GM12878 (cell line): ENCODE measurements at regions of chr5 and their contacts with region 1.

Region 1: DNA sequence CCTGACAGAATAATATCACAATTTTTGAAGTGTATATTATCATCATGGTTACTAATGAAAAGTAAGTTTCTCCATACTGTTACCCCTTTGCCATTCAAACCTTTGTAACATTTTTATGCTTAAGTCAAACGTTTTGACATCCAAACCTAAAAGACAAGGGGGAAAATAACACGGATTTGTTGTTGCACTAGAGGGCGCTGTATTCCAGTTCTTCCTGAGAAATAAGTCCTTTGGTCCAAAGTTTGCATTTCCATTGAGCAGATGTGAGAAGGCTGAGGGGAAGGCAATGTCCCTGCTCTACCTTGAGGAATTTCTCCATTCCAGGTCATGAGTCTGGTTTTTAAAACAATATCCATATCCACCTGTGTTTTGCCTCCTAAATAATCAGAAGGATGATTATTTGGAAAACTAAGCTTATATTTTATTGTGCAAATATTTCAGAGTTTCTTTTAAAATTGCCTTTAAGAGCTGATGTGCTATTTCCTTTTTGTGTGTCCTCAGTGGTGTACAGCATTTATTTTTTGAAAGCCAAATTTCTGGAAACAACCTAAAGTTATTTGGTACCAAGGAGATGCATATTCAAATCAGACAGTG is 9.7 kb downstream of the LECT2 start:
- DNase-seq: no peak
- ATAC-seq: peak; percentile 70
- H3K4me3 ChIP-seq: no peak overlapping the region
- H3K27ac ChIP-seq: no peak overlapping the region
- H3K4me1 ChIP-seq: no peaks in the 10 kb centered on the region
- H3K27me3 ChIP-seq: no peaks in the 10 kb centered on the region; a peak in 2 of 4 replicates
- CTCF ChIP-seq: peak; percentile 60 to 77 (median 66)
- EP300 ChIP-seq: no peak
- POLR2A ChIP-seq: no peak
- RAD21 ChIP-seq: peak; percentile 74

Region 2: GRCh38 chr5:135887351-135887864 is 57.7 kb before region 1 on chr5:
- CTCF ChIA-PET with region 1: interaction called, 6 read pairs
- POLR2A ChIA-PET with region 1: no interaction called
- RAD21 ChIA-PET with region 1: no interaction called
- SMC1A ChIA-PET with region 1: no interaction called
- in situ Hi-C with region 1: no loop called
- intact Hi-C with region 1: loop called (anchors 5 kb)
- DNase-seq: peak; percentile 25
- ATAC-seq: peak; percentile 98
- H3K4me3 ChIP-seq: no peak overlapping the region
- H3K27ac ChIP-seq: no peak overlapping the region
- H3K4me1 ChIP-seq: no peaks in the 10 kb centered on the region
- H3K27me3 ChIP-seq: no peaks in the 10 kb centered on the region
- CTCF ChIP-seq: peak; percentile 72 to 78 (median 74)
- EP300 ChIP-seq: no peak
- POLR2A ChIP-seq: no peak
- RAD21 ChIP-seq: peak; percentile 85

Region 3: GRCh38 chr5:136123236-136123768 is 178.2 kb after region 1 on chr5:
- CTCF ChIA-PET with region 1: no interaction called
- POLR2A ChIA-PET with region 1: no interaction called
- RAD21 ChIA-PET with region 1: no interaction called
- SMC1A ChIA-PET with region 1: no interaction called
- in situ Hi-C with region 1: no loop called
- intact Hi-C with region 1: no loop called
- DNase-seq: no peak
- ATAC-seq: no peak
- H3K4me3 ChIP-seq: no peak overlapping the region
- H3K27ac ChIP-seq: no peak overlapping the region
- H3K4me1 ChIP-seq: no peaks in the 10 kb centered on the region
- H3K27me3 ChIP-seq: peaks cover under 1 to 6% of the 10 kb centered on the region in 2 experiments; a peak in 3 of 4 replicates
- CTCF ChIP-seq: no peak
- EP300 ChIP-seq: no peak
- POLR2A ChIP-seq: no peak
- RAD21 ChIP-seq: no peak